ENCODE measurements at regions of chr17 and their contacts with region 1.

Region 1: DNA sequence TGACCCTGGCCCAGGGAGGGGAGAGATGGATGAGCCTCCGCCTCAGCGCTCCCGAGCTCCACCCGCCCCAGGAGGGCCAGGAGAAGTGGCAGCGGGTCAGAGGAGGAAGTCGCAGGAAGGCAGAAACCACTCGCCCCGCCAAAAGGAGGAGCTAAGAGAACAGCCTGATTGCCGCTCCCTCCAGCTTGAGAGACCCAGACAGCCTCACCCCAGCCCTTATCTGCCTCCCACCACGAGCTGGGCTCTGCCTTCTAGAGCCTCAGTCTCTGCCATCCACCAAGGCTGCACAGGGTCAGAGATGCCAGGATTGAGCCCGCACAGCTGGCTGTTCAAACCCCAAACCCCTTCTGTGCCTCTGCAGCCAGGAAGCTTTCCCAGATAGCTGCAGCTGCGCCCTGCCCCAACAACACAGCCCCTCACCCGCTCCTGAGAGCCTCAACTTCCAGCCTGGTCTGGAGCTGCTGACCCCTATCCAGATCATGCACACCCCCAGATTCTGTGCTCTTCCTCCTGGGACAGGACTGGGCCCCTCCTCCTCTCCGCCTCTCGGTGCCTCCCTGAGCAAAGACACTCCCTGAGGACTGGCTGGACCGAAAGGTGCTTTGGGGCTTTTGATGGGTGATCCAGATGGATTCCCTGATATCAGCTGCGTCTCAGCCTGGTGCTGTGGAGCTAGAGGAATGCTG is 1.0 kb upstream of the ATP2A3 start:
- DNase-seq: peak; percentile 58 to 82 (median 65)
- H3K4me3 ChIP-seq: peak overlapping the region; percentile 76 to 80
- H3K4me3 Mint-ChIP-seq: peak overlapping the region; percentile 90 to 94 (median 93)
- H3K27ac ChIP-seq: peak overlapping the region; percentile 77
- H3K27ac Mint-ChIP-seq: peak overlapping the region; percentile 87 to 98 (median 96)
- H3K4me1 ChIP-seq: peaks cover 37% of the 10 kb centered on the region
- H3K4me1 Mint-ChIP-seq: peaks cover 26 to 43% (median 35%) of the 10 kb centered on the region in 4 donors
- H3K27me3 ChIP-seq: no peaks in the 10 kb centered on the region
- H3K27me3 Mint-ChIP-seq: no peaks in the 10 kb centered on the region

Region 2: DNA sequence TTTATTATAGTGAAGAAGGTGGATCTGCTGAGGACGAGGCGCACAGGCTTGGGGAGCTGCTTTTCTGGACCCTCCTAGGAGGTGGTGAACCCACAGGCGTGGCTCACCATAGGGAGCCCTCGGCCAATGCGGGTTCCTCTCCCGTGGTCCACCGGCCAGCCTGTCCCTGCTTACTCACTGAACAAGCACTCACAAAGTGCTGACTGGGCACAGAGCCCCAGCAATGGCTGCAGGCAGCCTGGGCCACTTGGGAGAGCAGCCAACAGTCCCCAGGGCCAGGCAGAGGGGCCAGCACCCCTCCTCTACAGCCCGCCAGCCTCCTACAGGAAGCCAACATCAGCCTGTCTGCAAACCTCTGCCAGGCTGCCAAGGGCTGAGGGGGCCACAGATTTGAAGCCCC is 100.1 kb before region 1 on chr17:
- CTCF ChIA-PET with region 1: no interaction called
- POLR2A ChIA-PET with region 1: no interaction called
- intact Hi-C with region 1: no loop called
- DNase-seq: no peak
- H3K4me3 ChIP-seq: no peak overlapping the region
- H3K4me3 Mint-ChIP-seq: no peak overlapping the region
- H3K27ac ChIP-seq: no peak overlapping the region
- H3K27ac Mint-ChIP-seq: no peak overlapping the region
- H3K4me1 ChIP-seq: no peaks in the 10 kb centered on the region
- H3K4me1 Mint-ChIP-seq: no peaks in the 10 kb centered on the region
- H3K27me3 ChIP-seq: no peaks in the 10 kb centered on the region
- H3K27me3 Mint-ChIP-seq: no peaks in the 10 kb centered on the region

Region 3: DNA sequence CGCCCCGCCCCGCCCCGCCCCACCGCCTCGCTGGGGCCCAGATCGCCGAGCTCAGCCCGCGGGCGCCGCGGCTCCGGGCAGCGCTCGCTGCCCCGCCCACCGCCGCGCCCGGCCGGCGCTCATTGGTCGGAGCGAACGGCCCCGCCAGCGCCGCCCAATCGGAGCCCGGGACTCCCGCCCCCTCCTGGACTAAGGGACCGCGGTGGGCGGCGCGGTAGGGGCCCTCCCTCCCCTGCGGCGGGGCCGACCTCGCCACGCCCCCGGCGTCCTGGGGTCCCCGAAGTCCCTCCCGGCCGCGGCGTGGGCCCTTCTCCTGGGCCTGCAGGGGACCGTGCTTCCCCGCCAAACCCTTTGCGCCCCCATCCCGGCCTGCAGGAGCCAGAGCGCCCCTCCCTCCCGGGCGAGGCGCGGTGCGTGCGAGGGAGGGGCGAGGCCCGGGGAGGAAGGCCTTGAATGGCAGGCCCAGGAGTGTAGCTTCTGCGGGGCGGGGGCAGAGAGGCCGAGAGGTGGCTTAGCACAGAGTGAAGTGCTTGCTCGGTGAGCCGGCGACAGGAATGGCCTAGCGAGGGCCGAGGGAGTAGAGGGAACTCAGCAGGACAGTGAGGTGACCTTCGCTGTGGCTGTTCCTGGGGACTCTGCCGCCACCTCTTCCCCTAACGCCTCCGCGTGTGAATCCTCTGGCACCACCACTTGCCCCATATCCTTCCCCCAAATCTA is 72.1 kb before region 1 on chr17 and contains the start of gene CAMKK1:
- CTCF ChIA-PET with region 1: interaction called, 3 read pairs
- POLR2A ChIA-PET with region 1: interaction called, 3 read pairs
- intact Hi-C with region 1: loop called (anchors 1 kb)
- DNase-seq: peak; percentile 85 to 91 (median 86)
- H3K4me3 ChIP-seq: peak within 1 kb of the TSS; percentile 36 to 65
- H3K4me3 Mint-ChIP-seq: peak within 1 kb of the TSS; percentile 84 to 89 (median 87)
- H3K27ac ChIP-seq: peak within 1 kb of the TSS; percentile 55
- H3K27ac Mint-ChIP-seq: peak within 1 kb of the TSS; percentile 87 to 96 (median 91)
- H3K4me1 ChIP-seq: peaks cover 21% of the 10 kb centered on the region
- H3K4me1 Mint-ChIP-seq: peaks cover 22 to 46% (median 26%) of the 10 kb centered on the region in 4 donors
- H3K27me3 ChIP-seq: no peaks in the 10 kb centered on the region
- H3K27me3 Mint-ChIP-seq: no peaks in the 10 kb centered on the region
- total RNA-seq, gene CAMKK1: 3.5 TPM

Region 4: DNA sequence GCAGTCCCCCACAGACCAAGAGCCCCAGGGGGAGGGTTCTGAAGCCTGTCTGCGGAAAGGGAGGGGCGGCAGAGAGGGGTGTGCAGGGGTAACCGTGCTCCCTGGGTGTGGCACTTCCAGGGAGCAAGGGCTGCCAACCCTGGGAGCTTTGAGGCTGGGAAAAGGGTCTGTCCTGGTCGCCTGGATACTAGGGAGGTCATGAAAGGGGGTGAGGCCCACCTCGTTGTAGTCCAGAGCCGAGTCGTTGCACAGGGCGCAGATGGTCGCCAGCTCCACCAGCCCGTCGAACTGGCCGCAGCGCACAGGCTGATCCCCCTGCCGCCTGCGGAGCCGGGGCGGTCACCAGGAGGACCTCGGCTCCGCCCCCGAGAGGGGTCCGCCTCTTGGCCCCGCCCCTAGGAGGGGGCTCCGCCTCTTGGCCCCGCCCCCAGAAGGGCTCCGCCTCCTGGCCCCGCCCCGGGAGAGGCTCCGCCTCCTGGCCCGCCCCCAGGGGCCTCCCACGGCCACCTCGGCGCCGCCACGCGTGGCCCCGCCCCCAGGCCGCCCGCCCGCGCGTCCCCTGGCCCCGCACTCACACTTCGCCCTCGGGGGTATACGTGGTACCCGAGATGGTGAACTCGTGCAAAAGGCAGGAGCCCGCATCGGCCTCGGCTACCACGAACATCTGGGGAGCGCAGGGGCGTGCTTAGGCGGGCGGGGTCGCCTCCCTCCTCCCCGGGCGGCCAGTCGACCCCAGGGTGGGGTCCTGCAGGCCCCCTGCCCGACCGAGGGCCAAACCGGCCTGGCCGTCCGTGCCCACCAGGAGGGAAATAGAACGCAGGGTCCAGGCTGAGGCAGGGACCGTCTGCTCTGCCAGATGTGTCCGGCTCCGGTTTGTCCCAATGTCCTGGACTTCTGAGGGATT is 20.5 kb before region 1 on chr17:
- CTCF ChIA-PET with region 1: interaction called, 4 read pairs
- POLR2A ChIA-PET with region 1: interaction called, 9 read pairs
- intact Hi-C with region 1: loop called (anchors 2 kb)
- DNase-seq: peak in 3 of 5 donors; percentile 22 to 44 (median 41)
- H3K4me3 ChIP-seq: no peak overlapping the region
- H3K4me3 Mint-ChIP-seq: no peak overlapping the region
- H3K27ac ChIP-seq: no peak overlapping the region
- H3K27ac Mint-ChIP-seq: no peak overlapping the region
- H3K4me1 ChIP-seq: no peaks in the 10 kb centered on the region
- H3K4me1 Mint-ChIP-seq: peaks cover 0 to 3% (median under 1%) of the 10 kb centered on the region in 4 donors
- H3K27me3 ChIP-seq: no peaks in the 10 kb centered on the region
- H3K27me3 Mint-ChIP-seq: no peaks in the 10 kb centered on the region

Region 5: DNA sequence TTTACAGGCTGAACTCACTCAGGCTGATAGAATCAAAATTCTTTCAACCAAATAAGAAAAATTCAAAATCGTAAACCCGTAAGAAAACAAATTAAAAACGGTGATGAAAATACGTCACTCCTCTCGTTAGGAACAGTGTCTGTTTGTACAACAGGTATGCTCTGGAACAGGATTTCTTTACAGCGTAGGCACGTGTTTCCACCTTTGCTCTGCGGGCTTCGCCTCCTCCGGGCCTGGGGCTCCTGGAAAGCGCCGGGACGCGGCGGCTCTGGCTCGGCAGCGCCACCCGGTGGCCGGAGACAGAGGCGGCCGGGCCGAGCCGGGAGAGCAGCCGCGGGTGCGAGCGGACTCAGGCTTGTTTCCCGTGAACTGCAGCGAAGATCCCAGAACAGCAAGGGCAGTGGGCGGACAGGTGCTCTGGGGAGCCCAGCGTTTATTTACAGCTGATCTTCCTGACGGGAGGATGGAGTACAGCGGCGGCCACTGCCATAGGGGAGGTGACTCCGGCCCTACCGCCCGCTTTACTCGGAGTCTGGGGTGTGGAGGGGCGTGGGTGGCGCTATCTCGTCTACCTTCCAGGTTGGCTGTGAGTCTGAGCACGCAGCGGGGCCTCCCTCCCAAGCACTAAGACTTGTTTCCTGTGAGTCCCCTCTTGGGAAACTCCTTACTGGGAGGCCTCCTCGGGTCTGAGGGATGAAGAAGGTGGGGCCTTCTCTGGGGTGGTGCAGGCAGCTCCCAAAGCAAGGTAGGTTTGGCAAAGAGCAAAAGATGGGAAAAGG is 39.4 kb after region 1 on chr17:
- CTCF ChIA-PET with region 1: interaction called, 17 read pairs
- POLR2A ChIA-PET with region 1: interaction called, 46 read pairs
- intact Hi-C with region 1: loop called (anchors 1 kb)
- DNase-seq: peak in 4 of 5 donors; percentile 52 to 65 (median 56)
- H3K4me3 ChIP-seq: no peak overlapping the region
- H3K4me3 Mint-ChIP-seq: peak overlapping the region in 1 of 8 donors; percentile 34
- H3K27ac ChIP-seq: no peak overlapping the region
- H3K27ac Mint-ChIP-seq: peak overlapping the region in 5 of 7 donors; percentile 42 to 79 (median 57)
- H3K4me1 ChIP-seq: peaks cover 8% of the 10 kb centered on the region
- H3K4me1 Mint-ChIP-seq: peaks cover 0 to 14% (median 4%) of the 10 kb centered on the region in 4 donors
- H3K27me3 ChIP-seq: no peaks in the 10 kb centered on the region
- H3K27me3 Mint-ChIP-seq: no peaks in the 10 kb centered on the region

Measured in CD4-positive, alpha-beta memory T cell (primary cell).